ENCODE measurements at regions of chr7 and their contacts with region 1.

Region 1: DNA sequence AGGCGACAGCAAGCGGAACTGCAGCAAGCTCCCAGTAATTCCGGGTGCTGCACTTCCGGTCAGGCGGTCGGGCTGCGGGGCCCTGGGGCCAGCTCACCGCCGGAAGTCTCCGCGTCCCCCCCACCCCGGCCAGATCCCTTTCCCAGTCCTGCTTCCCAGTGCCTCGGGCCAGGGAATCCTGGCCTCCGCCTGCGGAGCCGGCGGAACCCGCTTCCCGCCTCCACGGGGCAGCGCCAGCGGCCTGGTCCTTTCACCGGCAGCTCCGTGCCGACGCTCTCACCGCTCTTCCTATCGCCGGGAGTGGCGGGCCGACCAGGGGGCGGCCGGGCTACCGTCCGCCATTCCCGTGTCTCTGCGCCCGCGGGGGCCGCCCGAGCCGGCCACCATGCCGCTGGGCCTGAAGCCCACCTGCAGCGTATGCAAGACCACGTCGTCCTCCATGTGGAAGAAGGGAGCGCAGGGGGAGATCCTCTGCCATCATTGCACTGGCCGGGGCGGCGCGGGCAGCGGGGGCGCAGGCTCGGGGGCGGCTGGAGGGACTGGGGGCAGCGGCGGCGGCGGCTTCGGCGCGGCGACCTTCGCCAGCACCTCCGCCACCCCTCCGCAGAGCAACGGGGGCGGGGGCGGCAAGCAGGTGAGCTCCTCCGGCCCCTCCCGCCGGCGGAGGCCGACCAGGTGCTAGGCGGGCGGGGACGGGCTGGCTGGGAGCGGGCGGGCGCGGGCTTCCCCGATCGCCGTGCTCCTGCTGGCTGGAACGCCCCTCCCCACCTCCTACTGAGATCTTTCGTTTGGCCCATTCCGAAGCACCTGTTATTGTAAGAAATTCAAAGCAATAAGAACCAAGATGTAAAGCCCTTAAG is at the start of gene GATAD1:
- DNase-seq: peak; percentile 89
- H3K4me3 ChIP-seq: peak within 1 kb of the TSS; percentile 92 to 98 (median 95)
- H3K27ac ChIP-seq: peak within 1 kb of the TSS; percentile 85
- H3K4me1 ChIP-seq: peaks cover 10% of the 10 kb centered on the region
- H3K27me3 ChIP-seq: no peaks in the 10 kb centered on the region
- CTCF ChIP-seq: peak in 1 of 2 donors; percentile 84
- POLR2A ChIP-seq: peak; percentile 89
- total RNA-seq, gene GATAD1: 26.2 and 28.9 TPM in 2 replicates

Region 2: DNA sequence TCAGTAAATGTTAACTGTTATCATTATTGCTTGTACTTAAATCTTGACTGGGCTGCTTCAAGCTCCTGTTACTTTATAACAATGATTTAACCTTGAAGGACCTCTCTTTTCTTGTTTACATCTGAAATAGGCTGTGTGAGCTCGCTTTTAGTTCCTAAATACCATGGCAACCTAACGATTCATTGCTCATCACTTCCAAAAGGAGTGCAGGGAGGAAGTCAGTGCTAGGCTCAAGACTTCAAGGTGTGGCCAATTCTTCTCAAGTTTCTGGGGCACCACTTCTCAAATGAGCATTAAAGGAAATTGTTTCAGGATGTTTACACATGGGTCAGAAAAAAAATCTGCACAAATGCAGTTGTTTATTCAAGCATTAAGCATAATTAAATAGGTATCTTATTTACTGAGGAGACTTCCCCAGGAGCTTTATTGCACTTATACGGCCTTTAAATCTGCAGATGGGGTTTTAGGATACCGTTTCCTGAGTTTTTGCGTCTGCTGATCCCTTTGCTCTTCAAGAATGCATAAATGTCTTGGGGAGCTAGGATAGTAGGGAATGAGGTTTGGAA is 851.2 kb before region 1 on chr7:
- CTCF ChIA-PET with region 1: no interaction called
- POLR2A ChIA-PET with region 1: no interaction called
- dilution Hi-C with region 1: no loop called
- intact Hi-C with region 1: no loop called
- DNase-seq: no peak
- H3K4me3 ChIP-seq: no peak overlapping the region
- H3K27ac ChIP-seq: no peak overlapping the region
- H3K4me1 ChIP-seq: no peaks in the 10 kb centered on the region
- H3K27me3 ChIP-seq: no peaks in the 10 kb centered on the region
- CTCF ChIP-seq: no peak
- POLR2A ChIP-seq: no peak

Region 3: GRCh38 chr7:91826377-91826776 is 621.2 kb before region 1 on chr7:
- CTCF ChIA-PET with region 1: interaction called, 91 read pairs
- POLR2A ChIA-PET with region 1: no interaction called
- dilution Hi-C with region 1: no loop called
- intact Hi-C with region 1: loop called (anchors 1 kb)
- DNase-seq: no peak
- H3K4me3 ChIP-seq: no peak overlapping the region
- H3K27ac ChIP-seq: no peak overlapping the region
- H3K4me1 ChIP-seq: no peaks in the 10 kb centered on the region
- H3K27me3 ChIP-seq: no peaks in the 10 kb centered on the region
- CTCF ChIP-seq: no peak
- POLR2A ChIP-seq: no peak

Region 4: DNA sequence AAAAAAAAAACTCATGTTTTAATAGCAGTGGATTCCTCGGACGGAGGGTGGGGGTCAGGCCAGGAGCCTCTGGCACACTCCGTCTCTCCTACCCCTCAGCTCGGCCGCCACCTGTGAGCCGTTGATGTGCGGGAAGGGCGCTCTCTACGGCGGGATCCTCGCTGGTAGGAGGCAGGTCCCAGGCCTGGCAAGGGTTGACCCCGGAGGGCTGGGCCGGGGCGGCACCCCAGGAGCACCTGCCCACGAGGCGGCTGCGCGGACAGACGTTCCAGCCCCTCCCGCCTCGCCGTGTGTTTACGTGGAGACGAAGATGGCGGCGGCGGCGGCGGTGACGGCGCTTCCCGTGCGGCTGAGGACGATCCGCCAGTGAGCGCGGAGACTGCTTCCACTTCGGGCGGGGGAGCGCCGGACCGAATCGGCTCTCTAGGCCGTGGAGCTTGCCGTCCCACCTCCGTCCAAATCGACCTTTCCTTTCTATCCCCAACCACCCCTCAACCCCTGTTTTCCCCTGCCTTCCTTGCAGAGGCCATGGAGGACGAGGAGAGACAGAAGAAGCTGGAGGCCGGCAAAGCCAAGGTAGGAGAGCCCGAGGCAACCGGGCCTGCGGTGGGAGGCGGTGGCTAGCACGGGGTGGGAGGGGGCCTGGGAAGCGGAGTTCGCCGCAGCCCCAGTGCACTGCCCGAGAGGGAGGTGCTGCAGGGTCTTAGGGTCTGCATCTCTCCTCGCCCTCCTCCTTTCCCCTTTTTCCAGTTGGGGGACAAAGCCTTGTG is 506.8 kb before region 1 on chr7 and contains the start of gene AKAP9:
- CTCF ChIA-PET with region 1: interaction called, 5 read pairs
- POLR2A ChIA-PET with region 1: no interaction called
- dilution Hi-C with region 1: no loop called
- intact Hi-C with region 1: loop called (anchors 2 kb)
- DNase-seq: peak; percentile 89
- H3K4me3 ChIP-seq: peak within 1 kb of the TSS; percentile 84 to 95 (median 94)
- H3K27ac ChIP-seq: peak within 1 kb of the TSS; percentile 62
- H3K4me1 ChIP-seq: peaks cover 16% of the 10 kb centered on the region
- H3K27me3 ChIP-seq: no peaks in the 10 kb centered on the region
- CTCF ChIP-seq: no peak
- POLR2A ChIP-seq: peak; percentile 59
- total RNA-seq, gene AKAP9: 41.8 and 51.6 TPM in 2 replicates

Region 5: GRCh38 chr7:92245487-92246362 is 201.8 kb before region 1 on chr7 and contains the starts of genes ANKIB1 and KRIT1:
- CTCF ChIA-PET with region 1: interaction called, 25 read pairs
- POLR2A ChIA-PET with region 1: no interaction called
- dilution Hi-C with region 1: no loop called
- intact Hi-C with region 1: loop called (anchors 1 kb)
- DNase-seq: peak; percentile 91
- H3K4me3 ChIP-seq: peak within 1 kb of the TSS; percentile 99
- H3K27ac ChIP-seq: peak within 1 kb of the TSS; percentile 63
- H3K4me1 ChIP-seq: peaks cover 22% of the 10 kb centered on the region
- H3K27me3 ChIP-seq: no peaks in the 10 kb centered on the region
- CTCF ChIP-seq: peak in 1 of 2 donors; percentile 26
- POLR2A ChIP-seq: no peak
- total RNA-seq, gene ANKIB1: 48.4 and 56.5 TPM in 2 replicates
- total RNA-seq, gene KRIT1: 32.9 and 43.7 TPM in 2 replicates

Region 6: DNA sequence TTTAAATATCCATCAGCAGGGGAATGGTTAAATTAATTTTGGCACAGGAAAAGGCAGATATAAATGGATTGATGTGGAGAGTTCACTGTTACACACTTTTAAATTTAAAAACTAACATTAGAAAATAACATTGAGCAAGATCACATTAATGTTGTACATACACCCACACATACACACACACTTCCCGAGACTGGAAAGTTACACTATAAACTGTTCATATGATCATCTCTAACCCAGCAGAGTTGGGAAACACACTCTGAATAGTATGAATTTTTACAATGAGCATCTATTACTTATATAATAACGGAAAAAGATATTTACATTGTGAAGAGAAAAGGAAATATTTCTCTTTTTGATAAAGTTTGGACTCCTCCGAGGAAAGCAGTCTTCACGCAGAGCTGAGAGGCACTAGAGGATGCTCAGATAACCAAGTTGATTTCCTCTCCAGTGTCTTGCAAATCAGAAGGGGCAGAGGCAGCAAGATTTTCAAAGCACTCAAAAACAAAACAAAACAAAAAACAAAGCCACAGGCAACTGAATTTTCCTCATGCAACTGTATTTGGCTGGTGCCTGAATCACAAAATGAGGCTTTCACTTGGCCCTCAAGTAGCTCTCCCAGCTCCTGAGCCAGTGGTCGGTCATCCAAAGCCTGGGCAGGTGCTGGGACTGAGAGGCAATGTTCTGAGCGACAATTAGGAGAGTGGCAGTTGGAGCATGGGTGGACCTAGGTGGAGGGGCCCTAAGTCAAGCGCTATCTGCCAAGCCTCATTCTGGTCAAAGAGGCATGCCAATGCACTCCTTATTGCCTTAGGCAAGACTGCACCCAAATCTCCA is 10.7 kb before region 1 on chr7:
- CTCF ChIA-PET with region 1: interaction called, 36 read pairs
- POLR2A ChIA-PET with region 1: no interaction called
- dilution Hi-C with region 1: no loop called
- intact Hi-C with region 1: no loop called
- DNase-seq: no peak
- H3K4me3 ChIP-seq: no peak overlapping the region
- H3K27ac ChIP-seq: no peak overlapping the region
- H3K4me1 ChIP-seq: no peaks in the 10 kb centered on the region
- H3K27me3 ChIP-seq: peaks cover 8 to 10% of the 10 kb centered on the region in 2 experiments
- CTCF ChIP-seq: no peak
- POLR2A ChIP-seq: no peak

Measured in endothelial cell of umbilical vein (primary cell).